ENCODE measurements at regions of chr1 and their contacts with region 1.

Region 1: GRCh38 chr1:170959385-170959784 is 24.1 kb downstream of the MROH9 start:
- DNase-seq: peak; percentile 59
- H3K4me3 ChIP-seq: no peak overlapping the region
- H3K27ac ChIP-seq: peak overlapping the region; percentile 7
- H3K4me1 ChIP-seq: peaks cover 14% of the 10 kb centered on the region
- H3K27me3 ChIP-seq: no peaks in the 10 kb centered on the region
- CTCF ChIP-seq: no peak

Region 2: GRCh38 chr1:172154551-172154950 is 1195.2 kb after region 1 on chr1:
- CTCF ChIA-PET with region 1: interaction called, 11 read pairs
- dilution Hi-C with region 1: no loop called
- in situ Hi-C with region 1: no loop called
- intact Hi-C with region 1: no loop called
- DNase-seq: peak; percentile 68
- H3K4me3 ChIP-seq: peak overlapping the region in 1 of 3 experiments; percentile 31
- H3K27ac ChIP-seq: peak overlapping the region; percentile 87
- H3K4me1 ChIP-seq: peaks cover 24% of the 10 kb centered on the region
- H3K27me3 ChIP-seq: no peaks in the 10 kb centered on the region
- CTCF ChIP-seq: no peak

Measured in mammary epithelial cell (primary cell).